WTC11 (cell line): ENCODE measurements at regions of chr4 and their contacts with region 1.

Region 1: DNA sequence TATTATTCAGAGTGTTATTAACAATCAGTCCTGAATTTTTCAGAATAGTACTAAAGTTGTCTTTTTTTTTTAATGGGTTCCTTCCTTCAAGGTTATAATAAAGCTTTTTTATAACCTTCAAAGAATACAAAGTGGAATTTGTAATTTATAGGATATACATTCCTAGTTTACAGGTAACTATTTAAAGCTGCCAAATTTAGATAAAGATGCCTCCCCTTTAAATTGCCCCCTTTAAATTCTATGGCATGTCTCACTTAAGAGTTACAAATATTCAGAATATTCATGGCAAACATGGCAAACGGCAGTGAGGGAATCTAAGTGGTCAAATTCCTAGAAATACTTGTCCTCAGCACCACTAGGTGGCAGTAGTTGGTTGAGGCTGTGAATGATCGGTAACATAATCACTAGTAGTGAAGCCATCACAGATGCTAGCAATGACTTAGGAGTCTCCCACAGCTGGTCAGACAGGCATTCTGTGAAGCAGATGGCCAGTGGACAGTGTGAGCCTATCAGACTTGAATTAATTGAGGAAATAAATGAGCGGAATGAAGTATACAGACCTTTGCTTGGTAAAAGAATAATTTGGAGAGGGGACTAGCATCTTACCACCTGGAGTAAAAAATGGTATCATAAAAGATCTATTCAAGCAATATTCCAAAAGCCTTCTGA is 86.4 kb downstream of the CBR4 start:
- DNase-seq: peak; percentile 52
- ATAC-seq: peak; percentile 52
- H3K4me3 Mint-ChIP-seq: no peak overlapping the region
- H3K27ac Mint-ChIP-seq: no peak overlapping the region; the same call in none of the 2 replicates
- H3K4me1 Mint-ChIP-seq: peaks cover 48% of the 10 kb centered on the region
- H3K27me3 Mint-ChIP-seq: no peaks in the 10 kb centered on the region
- CTCF ChIP-seq: peak; percentile 70

Region 2: DNA sequence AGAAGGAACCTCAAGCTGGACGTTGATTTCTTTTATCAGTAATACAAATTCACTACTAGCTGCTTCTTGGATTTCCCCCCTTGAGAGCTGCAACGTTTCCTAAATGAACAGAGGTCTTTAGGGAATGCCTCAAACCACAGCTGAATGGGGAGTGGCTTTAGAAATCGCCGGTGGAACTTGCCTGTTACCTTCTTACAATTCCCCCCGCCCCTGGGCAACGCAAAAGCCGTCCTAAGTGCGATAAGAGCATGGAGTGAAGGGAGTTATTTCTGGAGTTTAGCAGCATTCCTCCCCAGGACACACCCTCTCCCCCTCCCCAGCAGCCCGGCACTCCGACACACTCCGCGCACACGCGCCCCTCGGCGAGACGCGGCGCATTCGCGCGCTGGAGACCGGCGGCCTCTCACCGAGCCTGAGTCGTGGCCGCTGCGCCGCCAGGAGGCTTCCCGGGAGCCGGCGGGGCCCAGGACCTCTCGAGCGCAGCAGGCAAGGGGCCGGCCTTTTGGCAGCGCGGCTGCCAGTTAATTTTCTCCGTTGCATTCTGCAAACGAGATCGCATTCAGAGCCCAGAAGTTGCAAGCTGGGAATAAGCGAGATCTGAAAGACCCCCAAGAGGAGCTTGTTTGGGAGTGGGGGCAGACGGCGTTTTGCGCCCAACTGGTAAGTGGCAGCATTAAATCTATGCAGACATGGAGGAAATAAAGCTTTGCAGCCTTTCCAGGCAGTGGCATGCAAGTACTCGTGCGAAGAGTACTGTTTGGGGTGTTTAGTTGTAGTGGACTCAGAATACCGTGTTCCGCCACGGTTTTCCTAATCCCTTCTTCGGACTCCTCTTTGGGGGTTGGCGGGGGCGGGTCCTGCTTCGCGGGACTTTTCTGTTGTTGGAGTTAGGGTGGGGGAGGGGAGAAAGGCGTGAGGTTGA is 292.2 kb before region 1 on chr4:
- CTCF ChIA-PET with region 1: interaction called, 14 read pairs
- POLR2A ChIA-PET with region 1: no interaction called
- DNase-seq: peak; percentile 72
- ATAC-seq: peak; percentile 93
- H3K4me3 Mint-ChIP-seq: peak overlapping the region; percentile 88
- H3K27ac Mint-ChIP-seq: peak overlapping the region; percentile 78; the same call in 1 of the 2 replicates
- H3K4me1 Mint-ChIP-seq: peaks cover 42% of the 10 kb centered on the region
- H3K27me3 Mint-ChIP-seq: peaks cover 19% of the 10 kb centered on the region
- CTCF ChIP-seq: no peak

Region 3: DNA sequence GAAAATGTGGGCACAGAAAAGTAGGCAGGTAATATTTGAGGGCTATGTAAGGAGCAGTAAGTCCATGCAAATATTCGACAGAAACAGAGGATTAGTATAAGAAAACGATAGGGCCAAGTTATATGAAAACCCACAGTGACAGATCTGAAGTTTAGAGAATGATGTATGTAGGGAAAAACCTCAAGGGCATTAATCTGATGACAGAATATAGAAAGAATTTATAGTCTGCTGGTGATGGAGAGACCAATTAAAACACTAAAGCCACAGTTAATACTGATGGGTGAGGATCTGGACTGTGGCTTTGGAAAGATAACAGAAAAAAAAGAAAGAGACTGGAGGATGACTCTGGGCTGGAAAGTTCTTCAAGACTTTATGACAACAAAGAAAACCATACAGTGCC is 257.1 kb before region 1 on chr4:
- CTCF ChIA-PET with region 1: no interaction called
- POLR2A ChIA-PET with region 1: no interaction called
- DNase-seq: no peak
- ATAC-seq: no peak
- H3K4me3 Mint-ChIP-seq: no peak overlapping the region
- H3K27ac Mint-ChIP-seq: no peak overlapping the region
- H3K4me1 Mint-ChIP-seq: peaks cover 21% of the 10 kb centered on the region
- H3K27me3 Mint-ChIP-seq: no peaks in the 10 kb centered on the region
- CTCF ChIP-seq: no peak

Region 4: DNA sequence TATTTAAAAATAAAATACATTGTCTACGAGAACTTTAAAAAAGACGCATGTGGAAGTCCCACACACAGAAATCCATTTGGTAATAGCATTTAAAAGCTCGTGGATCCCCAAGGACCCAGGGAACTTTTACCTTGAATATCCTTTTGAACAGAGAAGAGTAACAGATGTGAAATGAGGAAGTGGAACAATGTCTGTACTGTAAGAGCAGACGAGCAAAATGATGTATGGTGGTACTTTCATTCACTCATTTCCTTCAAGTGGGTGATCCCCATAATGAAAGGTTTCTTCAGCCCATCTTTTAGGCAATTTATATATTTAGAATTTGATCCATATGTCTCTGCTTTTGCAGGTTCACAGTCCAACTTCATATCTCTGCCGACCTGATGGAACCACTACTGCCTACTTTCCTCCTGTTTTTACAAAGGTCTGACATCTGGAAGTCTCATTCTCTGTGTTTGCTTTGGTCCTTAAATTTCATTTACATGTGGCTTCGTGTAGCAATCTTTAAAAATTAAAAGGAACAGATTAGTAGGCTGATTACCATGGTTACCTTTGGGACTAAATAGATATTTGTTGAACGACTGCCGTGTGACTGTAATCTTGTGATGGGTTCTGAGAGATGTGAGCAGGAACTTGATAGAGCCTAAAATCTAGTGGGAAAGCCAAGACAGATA is 238.4 kb before region 1 on chr4:
- CTCF ChIA-PET with region 1: no interaction called
- POLR2A ChIA-PET with region 1: no interaction called
- DNase-seq: no peak
- ATAC-seq: no peak
- H3K4me3 Mint-ChIP-seq: no peak overlapping the region
- H3K27ac Mint-ChIP-seq: no peak overlapping the region
- H3K4me1 Mint-ChIP-seq: peaks cover 14% of the 10 kb centered on the region
- H3K27me3 Mint-ChIP-seq: no peaks in the 10 kb centered on the region
- CTCF ChIP-seq: no peak

Region 5: DNA sequence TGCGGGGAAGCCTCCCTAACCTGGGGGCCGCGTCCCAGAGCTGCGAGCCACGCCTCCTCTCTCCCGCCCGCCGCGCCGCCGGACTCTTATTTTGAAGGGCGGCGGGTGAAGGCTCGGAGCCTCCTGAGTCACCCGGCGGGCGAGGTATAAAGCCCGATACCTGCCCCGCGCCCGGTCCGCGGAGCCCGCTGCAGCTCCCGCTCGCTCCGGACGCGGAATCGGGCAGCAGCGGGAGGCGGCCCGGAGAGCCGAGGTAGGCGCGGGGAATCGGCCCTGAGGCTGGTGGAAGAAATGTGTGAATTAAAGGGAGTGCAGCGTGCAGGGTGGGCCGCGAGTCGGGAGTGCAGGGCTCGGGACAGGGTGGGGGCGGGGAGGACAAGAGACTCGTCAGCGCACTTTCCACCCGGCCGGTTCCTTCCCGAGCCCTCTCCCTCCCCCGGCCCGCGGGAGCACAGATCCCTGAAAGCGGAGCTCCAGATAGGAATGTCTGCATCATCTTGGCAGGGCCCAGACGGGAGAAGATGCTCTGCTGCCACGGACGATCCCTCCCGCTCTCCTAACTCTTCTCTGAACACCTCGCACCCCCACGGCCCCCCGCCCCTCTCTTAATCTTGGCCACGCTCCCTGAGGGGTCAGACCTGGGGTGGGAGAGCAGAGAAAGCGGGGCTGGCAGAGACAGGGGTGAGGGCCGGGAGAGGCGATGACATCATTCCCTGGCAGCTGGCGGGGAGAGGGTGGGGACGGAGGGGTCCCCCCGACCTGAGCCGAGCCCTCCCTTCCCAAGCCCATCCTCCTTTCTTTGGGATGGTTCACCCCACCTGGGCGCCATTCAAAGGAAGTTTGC is 91.5 kb before region 1 on chr4:
- CTCF ChIA-PET with region 1: interaction called, 43 read pairs
- POLR2A ChIA-PET with region 1: interaction called, 3 read pairs
- DNase-seq: peak; percentile 85
- ATAC-seq: peak; percentile 74
- H3K4me3 Mint-ChIP-seq: peak overlapping the region; percentile 98
- H3K27ac Mint-ChIP-seq: peak overlapping the region; percentile 96
- H3K4me1 Mint-ChIP-seq: peaks cover 42% of the 10 kb centered on the region
- H3K27me3 Mint-ChIP-seq: peaks cover 29% of the 10 kb centered on the region
- CTCF ChIP-seq: no peak

Region 6: GRCh38 chr4:168942985-168943384 is 19.3 kb after region 1 on chr4:
- CTCF ChIA-PET with region 1: interaction called, 24 read pairs
- POLR2A ChIA-PET with region 1: no interaction called
- DNase-seq: no peak
- ATAC-seq: peak; percentile 98
- H3K4me3 Mint-ChIP-seq: no peak overlapping the region
- H3K27ac Mint-ChIP-seq: no peak overlapping the region
- H3K4me1 Mint-ChIP-seq: peaks cover 8% of the 10 kb centered on the region
- H3K27me3 Mint-ChIP-seq: no peaks in the 10 kb centered on the region
- CTCF ChIP-seq: peak; percentile 78

Region 7: GRCh38 chr4:169492438-169493163 is 568.9 kb after region 1 on chr4:
- CTCF ChIA-PET with region 1: interaction called, 12 read pairs
- POLR2A ChIA-PET with region 1: no interaction called
- DNase-seq: peak; percentile 27
- ATAC-seq: peak; percentile 81
- H3K4me3 Mint-ChIP-seq: no peak overlapping the region
- H3K27ac Mint-ChIP-seq: no peak overlapping the region
- H3K4me1 Mint-ChIP-seq: no peaks in the 10 kb centered on the region
- H3K27me3 Mint-ChIP-seq: no peaks in the 10 kb centered on the region
- CTCF ChIP-seq: peak; percentile 74